Naive thymus-derived CD4-positive, alpha-beta T cell (primary cell): ENCODE measurements at regions of chr12 and their contacts with region 1.

Region 1: GRCh38 chr12:132489602-132490239 is at the start of gene FBRSL1:
- DNase-seq: peak; percentile 83 to 93 (median 91)
- ATAC-seq: peak; percentile 88
- H3K4me3 ChIP-seq: peak within 1 kb of the TSS; percentile 83
- H3K4me3 Mint-ChIP-seq: peak within 1 kb of the TSS; percentile 88 to 95 (median 92)
- H3K27ac ChIP-seq: peak within 1 kb of the TSS; percentile 96
- H3K27ac Mint-ChIP-seq: peak within 1 kb of the TSS; percentile 89 to 97 (median 94)
- H3K4me1 ChIP-seq: peaks cover 46 to 52% of the 10 kb centered on the region in 2 donors
- H3K4me1 Mint-ChIP-seq: peaks cover 51 to 76% (median 63%) of the 10 kb centered on the region in 7 donors
- H3K27me3 ChIP-seq: no peaks in the 10 kb centered on the region
- H3K27me3 Mint-ChIP-seq: no peaks in the 10 kb centered on the region
- total RNA-seq, gene FBRSL1: 56.3 to 105 (median 93.0) TPM

Region 2: DNA sequence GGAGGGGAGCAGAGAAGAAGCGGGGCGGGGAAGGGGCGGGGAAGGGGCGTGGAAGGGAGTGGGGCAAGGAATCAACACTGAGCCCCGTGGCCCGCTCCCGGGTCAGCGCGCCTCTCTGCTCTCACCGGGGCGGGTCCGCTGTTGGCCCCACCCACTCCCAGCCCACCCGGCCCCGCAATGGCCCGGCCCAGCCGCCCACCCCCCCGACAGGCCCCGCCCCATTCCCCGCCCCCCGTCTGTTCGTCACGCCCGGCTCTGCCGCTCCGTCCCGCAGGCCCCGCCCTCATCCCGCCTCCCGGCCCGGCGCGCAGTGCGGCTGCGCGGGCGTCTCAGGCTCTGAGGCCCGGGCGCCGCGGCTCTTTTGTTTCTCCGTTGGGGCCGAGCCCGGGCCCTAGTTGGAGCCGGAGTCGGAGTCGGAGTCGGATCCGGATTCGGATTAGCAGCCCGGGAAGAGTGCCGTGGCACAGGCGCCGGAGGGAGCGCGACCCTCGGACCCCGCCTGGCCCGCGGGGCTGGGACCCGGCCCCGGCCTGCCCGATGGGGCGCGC is 595.3 kb before region 1 on chr12 and contains the start of gene ULK1:
- CTCF ChIA-PET with region 1: no interaction called
- POLR2A ChIA-PET with region 1: no interaction called
- intact Hi-C with region 1: no loop called
- DNase-seq: peak; percentile 85 to 97 (median 92)
- ATAC-seq: peak; percentile 88
- H3K4me3 ChIP-seq: peak within 1 kb of the TSS; percentile 71
- H3K4me3 Mint-ChIP-seq: peak within 1 kb of the TSS; percentile 86 to 94 (median 92)
- H3K27ac ChIP-seq: peak within 1 kb of the TSS; percentile 83
- H3K27ac Mint-ChIP-seq: peak within 1 kb of the TSS; percentile 68 to 94 (median 85)
- H3K4me1 ChIP-seq: peaks cover 0 to 12% of the 10 kb centered on the region in 2 donors
- H3K4me1 Mint-ChIP-seq: peaks cover 10 to 29% (median 22%) of the 10 kb centered on the region in 7 donors
- H3K27me3 ChIP-seq: no peaks in the 10 kb centered on the region
- H3K27me3 Mint-ChIP-seq: no peaks in the 10 kb centered on the region
- total RNA-seq, gene ULK1: 33.9 to 109 (median 43.8) TPM

Region 3: DNA sequence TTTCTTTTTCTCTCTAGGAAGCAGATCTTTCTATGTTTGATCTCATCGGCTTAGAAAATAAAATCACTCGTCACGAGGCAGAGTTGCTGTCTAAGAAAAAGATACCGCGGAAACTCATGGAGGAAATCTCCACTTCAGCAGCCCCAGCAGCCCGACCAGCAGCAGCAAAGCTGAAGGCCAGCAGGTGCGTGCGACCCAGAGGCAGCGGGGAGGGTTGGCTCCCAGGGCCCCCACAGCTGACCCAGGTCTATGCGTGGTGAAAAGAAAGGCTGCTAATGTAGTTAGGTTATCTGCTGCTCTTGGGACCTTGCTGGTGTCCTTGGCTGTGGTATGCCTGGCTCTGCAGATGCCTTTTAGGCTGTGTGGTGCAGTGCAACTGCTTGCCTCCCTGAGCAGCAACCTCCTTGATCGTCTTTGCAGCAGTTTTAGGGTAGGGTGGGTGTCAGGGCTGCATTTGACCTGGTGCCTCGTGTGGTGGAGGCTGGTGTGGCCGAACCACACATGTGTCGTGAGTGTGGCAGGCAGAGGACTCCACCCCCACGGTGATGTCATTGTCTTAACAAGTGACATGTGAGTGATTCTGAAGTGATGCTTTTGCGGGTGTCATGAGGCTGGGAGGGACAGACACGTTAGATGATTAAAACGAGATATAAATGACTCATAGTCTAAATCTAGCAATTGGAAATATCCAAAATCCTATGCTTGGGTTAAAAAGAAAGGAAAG is 471.4 kb before region 1 on chr12:
- CTCF ChIA-PET with region 1: no interaction called
- POLR2A ChIA-PET with region 1: no interaction called
- intact Hi-C with region 1: no loop called
- DNase-seq: no peak
- ATAC-seq: no peak
- H3K4me3 ChIP-seq: no peak overlapping the region
- H3K4me3 Mint-ChIP-seq: no peak overlapping the region
- H3K27ac ChIP-seq: no peak overlapping the region
- H3K27ac Mint-ChIP-seq: peak overlapping the region in 1 of 9 donors; percentile 67
- H3K4me1 ChIP-seq: no peaks in the 10 kb centered on the region
- H3K4me1 Mint-ChIP-seq: peaks cover 0 to 5% (median 0%) of the 10 kb centered on the region in 7 donors
- H3K27me3 ChIP-seq: no peaks in the 10 kb centered on the region
- H3K27me3 Mint-ChIP-seq: no peaks in the 10 kb centered on the region

Region 4: DNA sequence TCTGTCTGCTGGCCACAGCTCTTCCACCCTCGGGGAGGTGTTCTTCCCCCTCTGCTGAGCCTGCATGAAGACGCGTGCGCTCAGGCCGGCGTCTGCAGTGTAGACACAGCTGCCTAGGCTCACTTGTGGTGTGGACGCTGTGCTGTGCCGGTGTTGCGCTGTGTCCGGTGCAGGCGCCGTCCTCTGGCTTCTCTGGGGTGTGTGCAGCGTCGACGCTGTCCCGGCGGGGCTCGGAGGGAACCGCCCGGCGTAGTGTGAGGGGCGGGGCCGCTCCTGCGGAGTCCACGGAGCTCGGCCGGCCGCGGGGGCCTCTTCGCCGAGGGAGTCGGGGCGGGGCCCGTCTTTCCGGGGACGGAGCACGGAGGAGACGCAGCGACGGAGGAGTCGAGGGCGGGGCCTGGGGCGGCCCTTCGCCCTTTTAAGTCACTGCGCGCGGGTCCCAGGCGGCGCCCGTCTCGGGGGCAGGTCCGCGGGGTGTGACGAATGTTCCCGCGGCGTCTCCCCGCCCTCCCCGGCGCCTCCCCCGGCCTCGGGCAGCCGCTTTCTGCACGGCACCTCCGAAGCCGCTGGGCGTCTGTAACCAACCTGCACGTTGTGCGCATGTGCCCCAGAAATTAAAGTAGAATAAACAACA is 300.2 kb before region 1 on chr12:
- CTCF ChIA-PET with region 1: no interaction called
- POLR2A ChIA-PET with region 1: no interaction called
- intact Hi-C with region 1: loop called (anchors 2 kb)
- DNase-seq: peak; percentile 86 to 95 (median 93)
- ATAC-seq: peak; percentile 93
- H3K4me3 ChIP-seq: peak overlapping the region; percentile 71
- H3K4me3 Mint-ChIP-seq: peak overlapping the region; percentile 80 to 99 (median 96)
- H3K27ac ChIP-seq: peak overlapping the region; percentile 82
- H3K27ac Mint-ChIP-seq: peak overlapping the region; percentile 86 to 99 (median 96)
- H3K4me1 ChIP-seq: peaks cover 20 to 39% of the 10 kb centered on the region in 2 donors
- H3K4me1 Mint-ChIP-seq: peaks cover 15 to 55% (median 40%) of the 10 kb centered on the region in 7 donors
- H3K27me3 ChIP-seq: no peaks in the 10 kb centered on the region
- H3K27me3 Mint-ChIP-seq: peaks cover 0 to 7% (median 0%) of the 10 kb centered on the region in 5 donors

Region 5: GRCh38 chr12:132429946-132430643 is 59.6 kb before region 1 on chr12:
- CTCF ChIA-PET with region 1: interaction called, 4 read pairs
- POLR2A ChIA-PET with region 1: interaction called, 11 read pairs
- intact Hi-C with region 1: loop called in 1 of 2 experiments (anchors 1 kb)
- DNase-seq: peak; percentile 49 to 71 (median 65)
- ATAC-seq: peak; percentile 93
- H3K4me3 ChIP-seq: peak overlapping the region; percentile 48
- H3K4me3 Mint-ChIP-seq: peak overlapping the region; percentile 42 to 81 (median 77)
- H3K27ac ChIP-seq: no peak overlapping the region
- H3K27ac Mint-ChIP-seq: peak overlapping the region in 8 of 9 donors; percentile 17 to 83 (median 76)
- H3K4me1 ChIP-seq: peaks cover 11 to 33% of the 10 kb centered on the region in 2 donors
- H3K4me1 Mint-ChIP-seq: peaks cover 17 to 44% (median 34%) of the 10 kb centered on the region in 7 donors
- H3K27me3 ChIP-seq: no peaks in the 10 kb centered on the region
- H3K27me3 Mint-ChIP-seq: peaks cover 0 to 6% (median 0%) of the 10 kb centered on the region in 5 donors

Region 6: DNA sequence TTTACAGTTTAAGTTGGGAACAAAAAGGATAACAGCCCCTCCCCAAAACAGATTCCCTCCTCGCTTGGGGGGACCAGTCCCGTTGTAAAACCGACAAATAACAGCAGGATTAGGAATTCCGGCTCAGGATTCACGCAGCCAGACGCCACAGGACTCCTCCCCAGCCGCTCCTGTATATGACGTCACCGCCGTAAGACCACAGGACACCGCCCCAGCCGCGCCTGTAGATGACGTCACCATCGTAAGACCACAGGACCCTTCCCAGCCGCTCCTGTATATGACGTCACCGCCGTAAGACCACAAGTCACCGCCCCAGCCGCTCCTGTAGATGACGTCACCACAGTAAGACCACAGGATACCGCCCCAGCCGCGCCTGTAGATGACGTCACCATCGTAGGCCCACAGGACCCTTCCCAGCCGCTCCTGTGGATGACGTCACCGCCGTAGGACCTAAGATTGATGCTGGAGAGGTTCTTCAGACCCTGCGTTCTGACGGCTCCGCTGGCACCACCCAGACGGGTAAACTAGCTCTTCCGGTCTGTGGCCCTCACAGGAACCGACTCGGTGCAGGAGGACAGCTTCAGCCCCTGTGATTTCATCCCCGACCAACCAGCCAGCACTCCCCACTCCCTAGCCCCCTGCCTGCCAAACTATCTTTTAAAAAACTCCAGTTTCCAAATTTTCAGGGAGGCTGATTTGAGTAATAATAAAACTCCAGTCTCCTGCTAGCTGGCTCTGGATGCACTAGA is 43.7 kb before region 1 on chr12:
- CTCF ChIA-PET with region 1: interaction called, 4 read pairs
- POLR2A ChIA-PET with region 1: interaction called, 52 read pairs
- intact Hi-C with region 1: loop called (anchors 1 kb)
- DNase-seq: peak; percentile 34 to 76 (median 64)
- ATAC-seq: peak; percentile 72
- H3K4me3 ChIP-seq: peak overlapping the region; percentile 61
- H3K4me3 Mint-ChIP-seq: peak overlapping the region; percentile 66 to 97 (median 90)
- H3K27ac ChIP-seq: peak overlapping the region; percentile 99
- H3K27ac Mint-ChIP-seq: peak overlapping the region; percentile 98 to 100 (median 100)
- H3K4me1 ChIP-seq: peaks cover 18 to 47% of the 10 kb centered on the region in 2 donors
- H3K4me1 Mint-ChIP-seq: peaks cover 21 to 74% (median 46%) of the 10 kb centered on the region in 7 donors
- H3K27me3 ChIP-seq: no peaks in the 10 kb centered on the region
- H3K27me3 Mint-ChIP-seq: peaks cover 0 to 3% (median 0%) of the 10 kb centered on the region in 5 donors

Region 7: DNA sequence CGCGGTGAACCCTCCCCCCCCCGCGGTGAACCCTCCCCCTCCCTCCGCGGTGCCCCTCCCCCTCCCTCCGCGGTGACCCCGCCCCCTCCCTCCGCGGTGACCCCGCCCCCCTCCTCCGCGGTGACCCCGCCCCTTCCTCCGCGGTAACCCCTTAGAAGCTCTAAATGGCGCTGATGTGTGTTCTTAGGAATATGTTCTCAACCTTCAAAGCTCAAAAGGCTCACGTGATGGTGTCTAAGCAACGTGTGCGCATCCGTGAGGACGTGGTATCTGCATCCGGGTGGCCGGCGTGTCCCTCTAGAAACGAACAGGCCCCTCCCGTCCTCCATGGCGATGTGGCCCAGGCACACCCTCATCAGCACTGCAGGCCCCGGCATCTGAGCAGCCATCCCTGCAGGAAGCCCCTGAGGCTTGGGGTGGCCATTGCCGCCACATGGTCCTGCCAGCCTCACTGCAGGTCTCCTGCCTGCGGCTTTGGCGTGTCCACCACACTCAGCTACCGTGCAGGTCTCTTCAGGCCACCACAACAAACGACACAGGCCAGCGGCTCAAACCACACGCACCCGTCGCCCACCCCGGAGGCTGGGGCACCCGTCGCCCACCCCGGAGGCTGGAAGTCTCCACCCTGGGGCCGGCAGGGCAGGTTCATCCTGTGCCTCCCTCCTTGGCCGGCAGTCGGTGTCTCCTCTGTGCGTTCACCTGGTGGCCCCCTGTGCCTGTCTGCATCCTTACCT is 14.2 kb before region 1 on chr12:
- CTCF ChIA-PET with region 1: interaction called, 4 read pairs
- POLR2A ChIA-PET with region 1: interaction called, 66 read pairs
- intact Hi-C with region 1: loop called (anchors 1 kb)
- DNase-seq: peak in 5 of 9 donors; percentile 42 to 69 (median 46)
- ATAC-seq: peak; percentile 55
- H3K4me3 ChIP-seq: peak overlapping the region; percentile 24
- H3K4me3 Mint-ChIP-seq: peak overlapping the region; percentile 44 to 77 (median 70)
- H3K27ac ChIP-seq: no peak overlapping the region
- H3K27ac Mint-ChIP-seq: peak overlapping the region in 8 of 9 donors; percentile 61 to 93 (median 86)
- H3K4me1 ChIP-seq: peaks cover 11 to 26% of the 10 kb centered on the region in 2 donors
- H3K4me1 Mint-ChIP-seq: peaks cover 29 to 54% (median 33%) of the 10 kb centered on the region in 7 donors
- H3K27me3 ChIP-seq: no peaks in the 10 kb centered on the region
- H3K27me3 Mint-ChIP-seq: peaks cover 0 to 12% (median 0%) of the 10 kb centered on the region in 5 donors

Region 8: DNA sequence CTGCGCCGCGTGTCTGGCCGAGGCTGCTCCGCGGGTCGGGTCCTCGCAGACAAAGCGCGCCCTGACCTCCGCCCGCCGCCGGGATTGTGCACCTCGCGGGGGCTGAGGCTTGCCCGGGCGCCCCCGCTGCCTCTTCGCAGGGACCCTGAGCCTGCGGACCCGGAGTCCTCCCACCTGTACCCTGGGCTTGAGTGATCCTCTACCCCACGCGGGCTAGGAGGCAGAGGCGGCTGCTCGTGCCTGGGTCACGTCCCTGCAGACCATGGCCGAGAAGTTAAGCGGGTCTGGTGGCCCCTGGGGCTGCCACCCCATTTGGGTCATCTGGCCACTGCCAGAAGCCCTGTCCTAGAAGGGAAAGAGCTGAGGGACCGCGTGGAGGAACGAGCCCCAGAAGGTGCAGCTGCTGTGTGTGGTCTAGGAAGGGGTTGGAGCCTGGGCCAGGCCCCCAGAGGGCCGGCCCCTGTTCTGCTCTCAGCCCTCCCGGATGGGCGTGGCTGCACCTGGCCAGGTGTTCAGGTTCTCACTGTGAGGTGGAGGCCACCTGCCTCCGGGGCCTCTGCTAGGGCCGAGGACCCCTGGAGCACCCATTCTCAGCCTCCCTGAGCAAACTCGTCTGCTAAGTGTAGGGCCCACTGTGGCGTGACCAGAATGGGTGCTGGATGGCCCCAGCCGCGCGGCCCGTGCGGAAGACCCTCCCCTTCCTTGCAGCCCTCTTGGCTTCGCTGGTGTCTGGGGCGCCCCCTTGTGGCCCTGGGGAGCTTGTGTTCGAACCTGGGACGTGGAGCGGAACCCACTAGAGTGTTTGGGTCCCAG is 71.1 kb after region 1 on chr12:
- CTCF ChIA-PET with region 1: interaction called, 3 read pairs
- POLR2A ChIA-PET with region 1: no interaction called
- intact Hi-C with region 1: loop called in 1 of 2 experiments (anchors 2 kb)
- DNase-seq: peak; percentile 47 to 82 (median 63)
- ATAC-seq: peak; percentile 64
- H3K4me3 ChIP-seq: peak overlapping the region; percentile 37
- H3K4me3 Mint-ChIP-seq: peak overlapping the region; percentile 41 to 80 (median 69)
- H3K27ac ChIP-seq: no peak overlapping the region
- H3K27ac Mint-ChIP-seq: no peak overlapping the region
- H3K4me1 ChIP-seq: peaks cover 7 to 25% of the 10 kb centered on the region in 2 donors
- H3K4me1 Mint-ChIP-seq: peaks cover 4 to 25% (median 17%) of the 10 kb centered on the region in 7 donors
- H3K27me3 ChIP-seq: no peaks in the 10 kb centered on the region
- H3K27me3 Mint-ChIP-seq: peaks cover 0 to 15% (median 8%) of the 10 kb centered on the region in 5 donors